K562 (cell line): ENCODE measurements at regions of chr15 and their contacts with region 1.

Region 1: DNA sequence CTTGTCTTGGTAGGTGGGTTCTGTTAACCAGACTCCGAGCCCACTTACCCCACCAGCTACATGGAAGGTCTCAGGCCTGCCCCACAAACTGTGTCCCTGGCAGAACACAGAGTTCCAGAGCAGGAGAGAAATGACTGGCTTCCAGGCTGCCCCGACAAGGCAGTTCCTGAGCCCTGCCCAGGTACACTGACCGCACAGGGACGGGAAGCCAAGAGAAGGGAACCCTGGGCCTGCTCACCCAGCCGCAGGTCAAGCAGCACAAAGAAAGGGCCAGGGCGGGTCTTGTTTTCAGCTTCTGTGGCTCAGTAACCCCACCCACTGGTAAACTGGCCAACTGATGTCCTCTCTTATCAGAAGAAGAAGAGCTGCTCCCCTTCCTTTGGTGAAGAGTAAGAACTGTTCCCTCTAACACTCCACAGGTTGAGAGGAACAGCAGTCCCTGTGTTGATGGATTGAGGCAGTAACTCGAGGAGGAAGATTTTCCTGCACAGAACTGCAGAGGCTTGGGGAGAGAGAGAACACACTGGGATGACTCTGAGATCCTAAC is 68.4 kb downstream of the CRTC3 start:
- DNase-seq: peak; percentile 74 to 91 (median 81)
- ATAC-seq: peak; percentile 98
- H3K4me3 ChIP-seq: peak overlapping the region; percentile 4; the same call in 1 of the 2 replicates
- H3K27ac ChIP-seq: peak overlapping the region; percentile 86
- H3K4me1 ChIP-seq: peaks cover 24 to 34% of the 10 kb centered on the region in 2 experiments
- H3K27me3 ChIP-seq: no peaks in the 10 kb centered on the region
- CTCF ChIP-seq: peak; percentile 57 to 72 (median 66)
- EP300 ChIP-seq: no peak
- POLR2A ChIP-seq: peak; percentile 47; the same call in 1 of the 2 replicates
- RAD21 ChIP-seq: peak; percentile 60 to 83

Region 2: GRCh38 chr15:90306560-90306959 is 291.5 kb before region 1 on chr15:
- CTCF ChIA-PET with region 1: no interaction called
- POLR2A ChIA-PET with region 1: no interaction called
- in situ Hi-C with region 1: no loop called
- intact Hi-C with region 1: no loop called
- DNase-seq: no peak
- ATAC-seq: peak; percentile 38; the same call in 1 of the 3 replicates
- H3K4me3 ChIP-seq: no peak overlapping the region
- H3K27ac ChIP-seq: no peak overlapping the region
- H3K4me1 ChIP-seq: peaks cover under 1 to 11% of the 10 kb centered on the region in 2 experiments; a peak in 4 of 5 replicates
- H3K27me3 ChIP-seq: no peaks in the 10 kb centered on the region
- CTCF ChIP-seq: 0 out of 6 replicates have a peak, but pooled peaks of 1 of the 3 experiments have one; percentile 1
- EP300 ChIP-seq: no peak
- POLR2A ChIP-seq: no peak
- RAD21 ChIP-seq: no peak

Region 3: DNA sequence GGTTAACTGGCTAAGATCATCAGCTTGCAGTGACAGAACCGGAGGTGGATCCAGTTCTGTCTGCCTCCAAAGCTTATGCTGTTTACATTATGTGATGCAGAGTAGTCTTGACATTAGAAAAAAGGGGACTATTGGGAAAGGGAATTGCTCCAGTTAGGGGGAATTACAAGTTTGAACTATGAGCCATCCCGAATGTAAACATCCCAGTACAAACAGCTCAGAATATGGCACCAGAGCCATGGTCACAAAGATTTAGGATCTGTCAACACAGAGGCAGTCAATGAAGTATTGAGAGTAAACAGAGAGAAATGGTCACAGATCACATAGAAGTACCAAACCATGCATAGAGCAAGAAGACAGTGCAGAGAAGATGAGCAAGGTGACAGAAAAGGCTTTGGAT is 108.2 kb before region 1 on chr15:
- CTCF ChIA-PET with region 1: no interaction called
- POLR2A ChIA-PET with region 1: interaction called, 3 read pairs
- in situ Hi-C with region 1: no loop called
- intact Hi-C with region 1: loop called (anchors 2 kb)
- DNase-seq: no peak
- ATAC-seq: no peak
- H3K4me3 ChIP-seq: no peak overlapping the region
- H3K27ac ChIP-seq: no peak overlapping the region
- H3K4me1 ChIP-seq: peaks cover 0 to under 1% of the 10 kb centered on the region in 2 experiments; a peak in 1 of 5 replicates
- H3K27me3 ChIP-seq: no peaks in the 10 kb centered on the region
- CTCF ChIP-seq: no peak
- EP300 ChIP-seq: no peak
- POLR2A ChIP-seq: no peak
- RAD21 ChIP-seq: no peak

Region 4: DNA sequence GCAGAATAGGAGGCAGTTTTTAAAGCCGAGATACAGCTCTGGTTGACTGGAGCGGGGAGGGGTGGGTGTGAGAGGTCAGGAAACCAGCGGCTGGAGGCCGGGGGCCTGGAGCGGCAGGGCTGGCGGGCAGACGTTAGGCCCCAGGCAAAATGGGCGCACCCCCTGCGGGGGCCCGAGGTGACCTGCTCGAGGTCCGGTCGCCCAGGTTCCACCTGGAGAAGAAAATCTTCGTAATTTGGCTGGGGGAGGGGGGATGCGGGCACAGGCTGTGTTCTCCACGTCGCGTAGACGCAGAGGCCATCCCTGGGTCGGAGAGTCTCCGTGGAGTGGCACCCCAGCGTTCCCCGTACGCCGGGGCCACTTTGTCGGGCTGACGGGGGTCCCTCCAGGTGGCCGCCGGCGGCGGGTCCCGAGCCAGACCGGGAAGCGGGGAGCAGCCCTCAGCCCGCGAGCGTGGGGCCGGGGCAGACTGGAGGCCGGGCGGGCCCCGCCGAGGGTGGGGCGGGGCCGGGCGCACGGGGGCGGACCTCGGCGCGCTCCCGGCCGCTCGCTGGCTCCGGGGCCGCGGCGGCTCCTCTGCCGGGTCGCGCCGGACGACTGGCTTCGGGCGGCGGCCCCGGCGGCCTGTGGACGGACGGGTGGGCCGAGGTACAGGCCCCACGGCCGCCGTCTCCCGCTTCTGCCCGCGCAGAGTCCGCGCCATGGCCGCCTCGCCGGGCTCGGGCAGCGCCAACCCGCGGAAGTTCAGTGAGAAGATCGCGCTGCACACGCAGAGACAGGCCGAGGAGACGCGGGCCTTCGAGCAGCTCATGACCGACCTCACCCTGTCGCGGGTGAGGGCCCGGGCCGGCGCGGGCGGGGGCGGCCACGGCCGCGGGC is 68.5 kb before region 1 on chr15 and contains the start of gene CRTC3:
- CTCF ChIA-PET with region 1: no interaction called
- POLR2A ChIA-PET with region 1: no interaction called
- in situ Hi-C with region 1: no loop called
- intact Hi-C with region 1: loop called (anchors 5 kb)
- DNase-seq: peak; percentile 64 to 93 (median 90)
- ATAC-seq: peak; percentile 90
- H3K4me3 ChIP-seq: peak within 1 kb of the TSS; percentile 65
- H3K27ac ChIP-seq: peak within 1 kb of the TSS; percentile 86
- H3K4me1 ChIP-seq: peaks cover 4 to 25% of the 10 kb centered on the region in 2 experiments; a peak in 3 of 5 replicates
- H3K27me3 ChIP-seq: no peaks in the 10 kb centered on the region
- CTCF ChIP-seq: 0 out of 6 replicates have a peak, but pooled peaks of 1 of the 3 experiments have one; percentile 16
- EP300 ChIP-seq: no peak
- POLR2A ChIP-seq: peak; percentile 57
- RAD21 ChIP-seq: no peak
- polyA plus RNA-seq, gene CRTC3: 1.2 to 2.1 TPM

Region 5: DNA sequence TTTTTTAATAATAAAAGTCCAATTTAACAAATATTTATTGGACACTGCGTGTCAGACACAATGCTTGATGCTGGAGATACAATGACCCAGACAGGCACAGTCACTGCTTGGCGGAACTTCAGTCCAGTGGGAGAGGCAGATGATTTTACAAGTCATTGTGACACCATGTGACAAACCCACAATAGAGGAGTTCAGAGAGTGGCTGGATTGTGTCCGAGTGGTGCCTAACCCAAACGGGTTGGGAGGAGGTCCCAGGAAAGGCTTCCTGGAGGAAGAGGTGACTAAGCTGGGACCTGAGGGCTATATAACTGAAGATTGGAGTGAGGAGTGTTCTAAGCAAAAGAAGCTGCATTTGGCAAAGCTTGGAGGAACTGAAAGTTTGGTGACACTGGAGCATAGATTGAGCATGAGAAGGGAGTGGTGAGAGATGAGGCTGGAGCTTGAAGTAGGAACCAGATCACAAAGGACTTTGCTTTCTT is 27.0 kb before region 1 on chr15:
- CTCF ChIA-PET with region 1: no interaction called
- POLR2A ChIA-PET with region 1: interaction called, 5 read pairs
- in situ Hi-C with region 1: no loop called
- intact Hi-C with region 1: loop called (anchors 2 kb)
- DNase-seq: peak; percentile 44 to 84 (median 60)
- ATAC-seq: peak; percentile 99
- H3K4me3 ChIP-seq: no peak overlapping the region
- H3K27ac ChIP-seq: peak overlapping the region; percentile 70
- H3K4me1 ChIP-seq: peaks cover 2 to 14% of the 10 kb centered on the region in 2 experiments; a peak in 4 of 5 replicates
- H3K27me3 ChIP-seq: no peaks in the 10 kb centered on the region
- CTCF ChIP-seq: no peak
- EP300 ChIP-seq: 0 out of 2 replicates have a peak, but pooled peaks have one; percentile 16
- POLR2A ChIP-seq: no peak
- RAD21 ChIP-seq: peak; percentile 7 to 17; a peak in 1 of 4 replicates